K562 (cell line): ENCODE measurements at regions of chr16 and their contacts with region 1.

Region 1: DNA sequence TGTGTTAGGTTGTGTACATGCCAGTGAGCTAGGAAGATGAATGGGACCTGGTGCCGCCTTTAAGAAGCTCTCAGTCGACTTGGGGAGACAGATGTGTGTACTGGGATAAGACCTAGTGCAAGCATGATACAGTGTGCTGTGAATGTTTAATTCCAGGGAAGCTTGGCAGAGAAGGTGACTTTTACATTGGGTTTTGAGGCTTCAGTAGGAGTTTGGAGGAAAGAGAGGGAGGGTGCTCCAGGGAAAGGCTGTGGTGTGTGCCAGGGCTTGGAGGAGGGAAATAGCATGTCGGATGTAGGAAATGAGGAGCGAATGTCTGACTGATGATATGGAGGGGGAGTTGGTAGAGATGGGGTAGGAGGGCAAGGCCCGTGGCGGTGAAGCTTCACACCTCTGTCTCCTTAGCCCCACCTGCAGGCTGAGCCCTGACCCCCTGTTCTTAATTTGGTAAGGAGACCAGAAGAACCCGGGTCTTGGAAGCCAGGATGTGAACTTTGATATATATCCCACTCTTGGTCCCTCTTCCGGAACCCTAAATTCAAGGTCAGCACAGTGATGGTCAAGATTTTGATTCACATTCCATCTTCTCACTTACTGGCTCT is 76.6 kb downstream of the PLCG2 start:
- DNase-seq: no peak
- ATAC-seq: peak; percentile 56; the same call in 2 of the 3 replicates
- H3K4me3 ChIP-seq: no peak overlapping the region
- H3K27ac ChIP-seq: no peak overlapping the region
- H3K4me1 ChIP-seq: no peaks in the 10 kb centered on the region
- H3K27me3 ChIP-seq: peaks cover 14 to 32% of the 10 kb centered on the region in 2 experiments
- CTCF ChIP-seq: peak in 1 of 3 experiments; percentile 17; a peak in 1 of 6 replicates
- EP300 ChIP-seq: no peak
- POLR2A ChIP-seq: no peak
- RAD21 ChIP-seq: peak in 1 of 2 experiments; percentile 26; a peak in 1 of 4 replicates

Region 2: GRCh38 chr16:81686391-81687130 is 169.1 kb before region 1 on chr16:
- CTCF ChIA-PET with region 1: no interaction called
- POLR2A ChIA-PET with region 1: no interaction called
- in situ Hi-C with region 1: no loop called
- intact Hi-C with region 1: no loop called
- DNase-seq: peak in 1 of 4 experiments; percentile 8
- ATAC-seq: no peak
- H3K4me3 ChIP-seq: no peak overlapping the region
- H3K27ac ChIP-seq: no peak overlapping the region
- H3K4me1 ChIP-seq: peaks cover 0 to 19% of the 10 kb centered on the region in 2 experiments; a peak in 3 of 5 replicates
- H3K27me3 ChIP-seq: no peaks in the 10 kb centered on the region
- CTCF ChIP-seq: no peak
- EP300 ChIP-seq: no peak
- POLR2A ChIP-seq: no peak
- RAD21 ChIP-seq: no peak

Region 3: DNA sequence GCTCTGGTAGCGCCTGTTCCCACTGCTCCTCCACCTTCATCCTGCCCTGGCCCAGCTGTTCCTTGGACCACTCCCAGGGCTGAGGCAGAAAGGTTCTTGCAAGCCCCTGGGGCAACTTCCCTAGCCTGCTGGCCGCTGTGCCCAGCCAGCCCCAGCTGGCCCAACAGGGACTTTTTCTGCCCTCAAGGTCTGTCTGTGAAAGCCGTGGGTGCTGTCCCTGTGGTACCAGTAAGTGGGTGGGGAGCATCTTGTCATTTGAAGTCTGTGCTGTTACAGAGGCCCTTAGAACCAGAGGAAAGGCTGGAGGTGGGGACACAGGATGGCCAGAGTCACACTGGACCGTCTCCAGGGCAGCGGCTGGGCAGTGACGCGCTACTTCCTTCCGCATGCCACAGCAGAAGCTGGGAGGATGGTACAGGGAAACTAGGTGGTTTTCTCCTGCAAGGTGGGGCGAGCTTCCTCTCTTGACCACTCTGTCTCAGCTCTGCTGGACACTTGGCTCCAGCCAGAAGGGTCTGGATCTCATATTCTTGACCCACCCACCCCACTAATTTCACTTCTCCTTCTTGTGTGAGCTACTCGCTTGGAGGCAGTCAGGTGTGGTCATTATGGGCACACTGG is 11.3 kb after region 1 on chr16:
- CTCF ChIA-PET with region 1: no interaction called
- POLR2A ChIA-PET with region 1: interaction called, 12 read pairs
- in situ Hi-C with region 1: no loop called
- intact Hi-C with region 1: no loop called
- DNase-seq: no peak
- ATAC-seq: peak; percentile 28; the same call in 2 of the 3 replicates
- H3K4me3 ChIP-seq: no peak overlapping the region
- H3K27ac ChIP-seq: no peak overlapping the region
- H3K4me1 ChIP-seq: no peaks in the 10 kb centered on the region
- H3K27me3 ChIP-seq: peaks cover 6 to 44% of the 10 kb centered on the region in 2 experiments; a peak in 3 of 5 replicates
- CTCF ChIP-seq: no peak
- EP300 ChIP-seq: no peak
- POLR2A ChIP-seq: no peak
- RAD21 ChIP-seq: no peak